Heart right ventricle (tissue), 16 donors: ENCODE measurements at regions of chr3 and their contacts with region 1.

Region 1: DNA sequence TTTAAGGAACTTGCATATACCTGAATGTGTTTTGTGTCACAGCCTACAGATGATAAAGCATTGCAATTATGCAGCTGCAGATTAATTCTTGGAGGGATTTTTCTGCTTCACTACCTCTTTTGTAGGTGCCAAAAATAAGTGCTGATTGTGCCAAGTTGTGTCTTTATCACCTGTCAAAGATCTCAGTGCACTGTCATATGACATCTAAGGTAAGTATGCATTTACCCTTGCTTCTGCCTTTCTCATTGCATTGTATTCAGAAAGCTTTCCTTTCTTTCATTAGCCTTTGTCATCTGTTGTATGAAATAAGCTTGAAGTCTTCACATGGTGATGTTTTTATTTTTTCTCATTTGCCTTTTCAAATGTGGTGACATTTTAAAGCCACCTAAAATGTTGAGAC is 382.0 kb upstream of the EPHA3 start:
- DNase-seq: no peak
- ATAC-seq: no peak
- H3K4me3 ChIP-seq: no peak overlapping the region
- H3K27ac ChIP-seq: no peak overlapping the region
- H3K4me1 ChIP-seq: no peaks in the 10 kb centered on the region
- H3K27me3 ChIP-seq: no peaks in the 10 kb centered on the region
- CTCF ChIP-seq: no peak

Region 2: DNA sequence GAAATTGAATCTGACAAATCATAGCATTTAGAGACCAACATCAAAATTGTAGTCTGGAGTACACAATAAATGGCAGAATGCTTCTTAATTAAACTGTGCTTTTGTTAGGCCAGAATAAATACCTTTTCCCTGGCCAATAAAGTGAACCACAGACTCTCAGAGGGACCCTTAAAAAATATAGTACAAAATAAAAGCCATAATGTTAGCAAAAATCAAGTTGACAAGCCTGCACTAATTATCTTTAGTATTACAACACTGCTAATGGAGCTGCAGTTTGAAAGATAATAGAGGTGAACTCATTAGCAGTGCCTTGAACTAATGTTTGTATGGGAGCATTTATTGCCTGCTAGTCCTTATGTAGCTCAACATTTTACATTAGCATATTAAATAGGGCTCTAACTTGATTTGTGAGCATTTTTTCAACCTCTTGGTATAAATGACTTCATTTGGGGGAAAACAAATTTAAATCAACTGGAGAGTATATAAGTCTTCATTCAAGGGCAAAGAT is 1183.3 kb after region 1 on chr3:
- intact Hi-C with region 1: loop called in 1 of 10 experiments (anchors 10 kb)
- DNase-seq: no peak
- ATAC-seq: no peak
- H3K4me3 ChIP-seq: no peak overlapping the region
- H3K27ac ChIP-seq: no peak overlapping the region
- H3K4me1 ChIP-seq: no peaks in the 10 kb centered on the region
- H3K27me3 ChIP-seq: no peaks in the 10 kb centered on the region
- CTCF ChIP-seq: no peak